HAP-1 (cell line): ENCODE measurements at regions of chr3 and their contacts with region 1.

Region 1: GRCh38 chr3:33372218-33373081 is 67.8 kb downstream of the UBP1 start:
- DNase-seq: peak; percentile 58 to 67
- H3K4me3 ChIP-seq: no peak overlapping the region
- H3K4me1 ChIP-seq: peaks cover 3% of the 10 kb centered on the region; the same call in 1 of the 2 replicates
- H3K27me3 ChIP-seq: no peaks in the 10 kb centered on the region

Region 2: DNA sequence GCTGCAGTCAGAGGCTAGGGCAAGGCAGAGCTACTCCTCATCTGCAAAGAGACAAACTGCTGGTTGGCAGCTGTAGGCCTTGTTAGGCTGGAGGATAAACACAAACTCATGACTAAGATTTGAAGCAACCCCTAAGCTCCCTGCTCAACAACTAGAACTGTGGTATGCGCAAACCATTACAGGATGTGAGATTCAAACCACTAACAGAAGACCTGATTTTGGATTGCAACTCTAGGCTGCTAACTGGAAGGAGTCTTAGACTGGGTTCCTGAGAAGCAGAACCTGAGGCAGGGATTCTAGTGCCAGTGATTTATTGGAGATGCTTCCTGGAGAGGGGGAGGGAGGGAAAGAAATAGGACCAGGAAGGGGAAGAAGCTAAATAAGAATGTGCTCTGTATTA is 398.5 kb before region 1 on chr3:
- in situ Hi-C with region 1: loop called (anchors 25 kb)
- DNase-seq: no peak
- H3K4me3 ChIP-seq: no peak overlapping the region
- H3K4me1 ChIP-seq: no peaks in the 10 kb centered on the region
- H3K27me3 ChIP-seq: no peaks in the 10 kb centered on the region

Region 3: GRCh38 chr3:33131331-33132018 is 241.0 kb before region 1 on chr3:
- in situ Hi-C with region 1: loop called (anchors 5 kb)
- DNase-seq: peak; percentile 78 to 90
- H3K4me3 ChIP-seq: no peak overlapping the region
- H3K4me1 ChIP-seq: peaks cover 12% of the 10 kb centered on the region
- H3K27me3 ChIP-seq: no peaks in the 10 kb centered on the region